ENCODE measurements at regions of chr10 and their contacts with region 1.

Region 1: DNA sequence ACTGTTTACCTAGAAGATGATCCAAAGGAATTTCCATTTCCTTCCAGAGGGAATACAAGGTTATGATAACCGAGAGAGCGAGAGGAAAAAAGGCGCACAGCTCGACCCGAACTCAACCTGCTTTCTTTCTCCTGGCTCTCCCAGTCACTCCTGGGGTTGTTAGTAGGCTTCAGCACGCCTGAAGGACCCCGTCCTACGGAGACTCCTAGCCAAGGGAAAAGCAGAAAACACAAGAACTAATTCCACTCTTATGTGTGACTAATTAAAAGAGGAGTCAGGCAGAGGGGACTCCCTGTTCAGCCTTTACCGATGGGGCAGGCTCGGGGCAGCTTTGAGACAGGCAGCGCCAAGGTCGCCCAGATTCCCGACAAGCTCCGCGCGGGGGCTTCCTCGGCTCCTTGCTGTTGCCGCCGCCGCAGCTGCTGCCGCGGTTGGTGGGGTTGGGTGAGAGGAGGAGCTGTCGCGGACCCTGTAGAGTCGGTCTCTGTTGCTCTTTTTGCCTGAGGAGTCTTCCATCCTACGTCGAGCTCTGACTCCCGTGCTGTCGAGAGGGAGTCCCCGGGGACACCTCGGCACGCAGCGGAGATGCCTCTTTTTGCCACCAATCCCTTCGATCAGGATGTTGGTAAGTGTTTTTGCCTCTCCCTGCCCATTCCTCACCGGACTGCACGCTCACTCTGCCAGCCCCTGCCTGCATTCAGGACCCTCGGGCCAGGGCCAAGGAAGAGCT is at the start of gene STAM:
- DNase-seq: peak; percentile 93 to 95
- ATAC-seq: peak; percentile 83 to 94 (median 92)
- H3K4me3 ChIP-seq: peak within 1 kb of the TSS; percentile 88
- H3K4me3 Mint-ChIP-seq: peak within 1 kb of the TSS; percentile 98
- H3K27ac ChIP-seq: peak within 1 kb of the TSS; percentile 96
- H3K27ac Mint-ChIP-seq: peak within 1 kb of the TSS; percentile 98
- H3K4me1 ChIP-seq: peaks cover 28% of the 10 kb centered on the region
- H3K4me1 Mint-ChIP-seq: peaks cover 50 to 53% of the 10 kb centered on the region in 2 donors
- H3K27me3 ChIP-seq: no peaks in the 10 kb centered on the region
- H3K27me3 Mint-ChIP-seq: no peaks in the 10 kb centered on the region
- CTCF ChIP-seq: no peak
- total RNA-seq, gene STAM: 37.8 to 40.2 (median 38.6) TPM

Region 2: DNA sequence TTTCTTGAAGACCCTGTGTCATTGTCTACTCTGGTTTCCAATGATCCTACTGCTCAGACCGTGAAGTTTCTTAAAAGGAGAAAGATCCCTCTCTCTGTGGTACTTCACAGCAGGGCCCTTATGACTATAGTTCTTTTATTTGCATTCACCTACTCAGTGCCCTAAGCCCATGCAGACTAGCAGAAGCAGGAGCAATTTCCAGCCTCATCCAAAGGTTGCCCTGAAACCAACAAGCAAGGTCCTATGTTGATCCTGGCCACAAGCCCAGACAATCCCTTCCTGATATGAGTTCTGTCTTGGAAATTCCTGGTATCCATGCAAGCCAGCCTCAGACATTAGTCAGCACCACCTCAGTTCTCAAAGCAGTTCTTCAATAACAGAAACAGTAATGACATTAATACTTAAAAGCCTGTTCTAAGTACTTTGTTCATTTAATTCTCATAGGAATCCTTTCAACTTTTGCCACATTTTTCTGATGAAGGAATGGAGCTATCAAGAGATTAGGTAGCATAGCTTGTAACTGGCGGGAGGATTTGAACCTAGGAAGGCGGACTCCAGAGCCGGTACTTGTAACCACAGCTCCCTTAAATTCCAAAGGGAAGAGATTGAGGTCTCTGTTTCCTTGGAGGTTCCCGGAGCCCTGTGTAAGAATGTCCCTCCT is 131.4 kb before region 1 on chr10:
- intact Hi-C with region 1: loop called (anchors 1 kb)
- DNase-seq: no peak
- ATAC-seq: no peak
- H3K4me3 ChIP-seq: no peak overlapping the region
- H3K4me3 Mint-ChIP-seq: peak overlapping the region; percentile 37
- H3K27ac ChIP-seq: peak overlapping the region; percentile 98
- H3K27ac Mint-ChIP-seq: peak overlapping the region; percentile 87 to 96
- H3K4me1 ChIP-seq: peaks cover 48% of the 10 kb centered on the region
- H3K4me1 Mint-ChIP-seq: peaks cover 45 to 48% of the 10 kb centered on the region in 2 donors
- H3K27me3 ChIP-seq: no peaks in the 10 kb centered on the region
- H3K27me3 Mint-ChIP-seq: no peaks in the 10 kb centered on the region
- CTCF ChIP-seq: no peak

Region 3: GRCh38 chr10:17617031-17617911 is 26.6 kb before region 1 on chr10 and contains the start of gene HACD1:
- intact Hi-C with region 1: loop called (anchors 2 kb)
- DNase-seq: peak; percentile 38 to 63
- ATAC-seq: peak; percentile 71 to 73 (median 73)
- H3K4me3 ChIP-seq: peak within 1 kb of the TSS; percentile 52
- H3K4me3 Mint-ChIP-seq: peak within 1 kb of the TSS; percentile 90
- H3K27ac ChIP-seq: no peak within 1 kb of the TSS
- H3K27ac Mint-ChIP-seq: peak within 1 kb of the TSS in 1 of 2 donors; percentile 59
- H3K4me1 ChIP-seq: peaks cover 12% of the 10 kb centered on the region
- H3K4me1 Mint-ChIP-seq: peaks cover 0 to 5% of the 10 kb centered on the region in 2 donors
- H3K27me3 ChIP-seq: no peaks in the 10 kb centered on the region
- H3K27me3 Mint-ChIP-seq: peaks cover 5 to 22% of the 10 kb centered on the region in 2 donors
- CTCF ChIP-seq: no peak
- total RNA-seq, gene HACD1: 0.82 to 1.5 (median 0.87) TPM

Region 4: DNA sequence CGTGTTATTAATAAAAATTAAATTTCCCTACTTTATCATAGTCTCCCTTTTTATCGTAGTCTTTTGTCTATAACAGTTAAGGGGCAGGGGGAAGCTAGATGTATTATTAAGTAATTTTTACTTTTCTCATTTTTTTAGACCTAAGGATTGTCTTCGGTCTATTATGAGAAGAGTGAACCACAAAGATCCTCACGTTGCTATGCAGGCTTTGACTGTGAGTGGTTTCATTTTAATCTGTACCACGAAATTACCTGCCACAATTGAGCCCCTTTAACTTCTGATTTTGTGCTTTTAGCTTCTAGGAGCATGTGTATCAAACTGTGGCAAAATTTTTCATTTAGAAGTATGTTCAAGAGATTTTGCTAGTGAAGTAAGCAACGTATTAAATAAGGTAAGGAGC is 40.6 kb after region 1 on chr10:
- intact Hi-C with region 1: loop called (anchors 5 kb)
- DNase-seq: peak in 1 of 2 donors; percentile 35
- ATAC-seq: no peak
- H3K4me3 ChIP-seq: no peak overlapping the region
- H3K4me3 Mint-ChIP-seq: no peak overlapping the region
- H3K27ac ChIP-seq: no peak overlapping the region
- H3K27ac Mint-ChIP-seq: no peak overlapping the region
- H3K4me1 ChIP-seq: no peaks in the 10 kb centered on the region
- H3K4me1 Mint-ChIP-seq: peaks cover 30 to 50% of the 10 kb centered on the region in 2 donors
- H3K27me3 ChIP-seq: no peaks in the 10 kb centered on the region
- H3K27me3 Mint-ChIP-seq: no peaks in the 10 kb centered on the region
- CTCF ChIP-seq: no peak

Measured in natural killer cell (primary cell).